ENCODE measurements at regions of chr7 and their contacts with region 1.

Region 1: DNA sequence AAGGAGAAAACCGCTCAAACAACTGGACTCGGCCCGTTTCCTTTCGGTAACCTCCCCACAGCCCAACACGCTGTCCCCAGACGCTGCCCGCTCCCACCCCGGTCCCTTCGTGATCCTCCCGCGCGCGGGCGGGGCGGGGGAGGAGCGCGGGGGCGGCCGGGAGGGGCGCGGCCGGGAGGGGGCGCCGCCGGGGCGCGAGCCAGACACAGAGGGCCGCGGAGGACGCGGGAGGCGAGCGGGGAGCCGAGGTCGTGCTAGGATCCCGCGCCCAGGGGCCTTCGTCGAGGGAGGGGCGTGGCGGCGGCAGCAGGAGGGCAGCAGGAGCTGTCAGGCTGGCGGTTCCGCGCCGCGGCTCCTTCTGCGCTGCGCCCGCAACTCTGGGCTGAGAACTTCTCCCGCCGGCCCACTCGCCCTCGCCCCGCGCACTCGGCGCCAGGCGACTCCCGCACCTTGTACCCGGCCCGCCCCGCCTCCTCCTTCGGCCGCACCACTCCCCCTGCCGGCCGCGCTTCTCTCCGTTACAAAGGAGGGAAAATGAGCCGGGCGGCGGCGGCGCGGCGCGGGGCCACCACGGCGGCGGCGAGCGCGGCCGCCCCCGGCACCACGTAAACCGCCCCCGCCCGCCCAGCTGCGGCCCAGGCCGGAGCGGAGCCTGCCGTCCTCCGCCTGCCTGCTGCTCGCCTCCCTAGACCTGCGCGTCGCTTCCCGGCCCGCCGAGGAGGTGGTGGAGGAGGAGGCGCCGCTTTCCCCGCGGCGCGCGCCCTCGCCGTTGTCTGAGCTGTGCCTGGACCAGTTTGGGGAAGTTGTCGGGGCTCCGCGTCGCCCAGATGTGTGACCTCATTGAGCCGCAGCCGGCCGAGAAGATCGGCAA is at the start of gene CDK14:
- DNase-seq: peak; percentile 95
- ATAC-seq: peak; percentile 85
- total RNA-seq, gene CDK14: 26.3 TPM

Region 2: GRCh38 chr7:90843472-90843871 is 247.4 kb after region 1 on chr7:
- intact Hi-C with region 1: loop called (anchors 10 kb)
- DNase-seq: no peak
- ATAC-seq: peak; percentile 42